SK-N-SH (cell line): ENCODE measurements at regions of chr14 and their contacts with region 1.

Region 1: DNA sequence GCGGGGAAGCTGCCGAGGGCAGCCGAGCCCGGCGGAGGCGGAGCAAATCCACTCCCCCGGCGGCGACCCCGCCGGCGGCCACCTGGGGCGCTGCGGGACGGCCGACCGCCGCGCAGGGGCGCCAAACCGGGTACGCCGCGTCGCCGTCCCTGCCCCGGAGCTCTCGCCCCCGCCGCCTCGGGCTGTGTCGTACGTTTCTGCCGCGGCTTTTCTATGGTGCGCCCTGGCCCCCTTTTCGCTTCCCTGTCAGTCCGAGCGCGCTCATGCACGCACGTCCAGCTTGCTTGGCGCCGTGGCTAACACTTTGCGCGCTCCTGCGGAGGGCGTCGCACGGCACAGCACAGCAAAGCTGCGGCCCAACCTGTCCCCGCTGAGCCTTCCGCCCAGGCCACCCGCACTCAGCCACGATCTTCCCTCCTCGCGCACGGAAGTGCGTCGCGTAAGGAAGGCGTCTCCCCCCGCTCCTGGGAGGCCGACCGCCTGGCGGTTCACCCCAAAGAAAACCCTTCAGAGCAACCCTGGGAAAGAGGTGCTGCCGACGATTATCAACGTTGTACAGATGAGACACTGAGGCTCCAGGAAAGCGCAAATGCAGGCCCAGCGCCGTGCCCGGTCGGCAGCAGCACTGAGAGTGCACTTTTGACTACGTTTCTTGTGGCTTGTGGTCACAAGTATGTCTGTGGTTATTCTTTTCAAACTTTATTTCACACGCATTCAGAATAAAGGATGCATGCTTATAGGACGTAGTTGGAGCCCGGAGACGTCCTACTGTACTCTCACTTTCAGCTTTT is at the start of gene HECTD1:
- DNase-seq: peak; percentile 97
- H3K4me3 ChIP-seq: peak within 1 kb of the TSS; percentile 77 to 87
- H3K27ac ChIP-seq: peak within 1 kb of the TSS; percentile 95 to 98
- H3K4me1 ChIP-seq: peaks cover 5 to 18% of the 10 kb centered on the region in 2 experiments
- H3K27me3 ChIP-seq: no peaks in the 10 kb centered on the region
- CTCF ChIP-seq: peak; percentile 67
- EP300 ChIP-seq: peak in 1 of 2 experiments; percentile 19; a peak in 2 of 4 replicates
- RAD21 ChIP-seq: peak; percentile 48
- polyA plus RNA-seq, gene HECTD1: 43.2 and 48.8 TPM in 2 replicates

Region 2: DNA sequence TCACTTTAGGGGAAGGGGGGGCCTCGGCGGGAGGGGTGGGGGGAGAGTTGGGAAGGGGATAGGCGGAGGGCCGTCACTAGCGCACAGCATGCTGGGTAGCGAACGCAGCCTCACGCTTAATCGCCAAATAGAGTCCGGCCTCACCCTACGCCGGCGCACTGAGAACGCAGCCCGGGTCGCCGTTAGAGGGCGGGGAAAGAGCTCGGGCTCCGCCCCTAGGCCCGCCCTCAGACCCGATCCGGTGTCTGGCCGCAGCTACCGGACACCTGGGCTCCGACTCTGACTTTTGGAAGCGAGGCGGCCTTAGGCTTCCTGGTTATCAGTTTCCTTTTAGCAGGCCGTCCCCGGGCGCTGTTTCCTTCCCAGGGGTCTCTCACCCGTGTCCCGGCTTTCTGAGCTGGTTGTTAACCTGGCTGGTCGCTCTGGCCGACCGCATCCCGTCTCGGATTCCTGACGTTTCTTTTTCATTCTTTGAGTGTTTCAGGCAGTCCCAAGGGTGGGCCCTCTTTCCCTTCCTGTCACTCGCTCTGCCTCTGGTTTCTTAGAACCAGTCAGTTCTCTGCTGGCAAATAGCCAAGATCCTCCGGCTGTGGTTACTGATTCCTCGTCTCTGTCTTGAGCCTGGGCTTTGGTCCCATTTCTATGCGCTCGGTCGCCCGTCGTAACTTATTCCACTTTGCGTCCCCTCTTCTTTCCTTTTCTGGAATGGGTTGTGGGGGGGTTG is 181.4 kb before region 1 on chr14:
- CTCF ChIA-PET with region 1: no interaction called
- POLR2A ChIA-PET with region 1: interaction called, 12 read pairs
- DNase-seq: peak; percentile 93
- H3K4me3 ChIP-seq: peak overlapping the region; percentile 73 to 96
- H3K27ac ChIP-seq: peak overlapping the region; percentile 94 to 98
- H3K4me1 ChIP-seq: peaks cover 9 to 13% of the 10 kb centered on the region in 2 experiments; a peak in 3 of 4 replicates
- H3K27me3 ChIP-seq: no peaks in the 10 kb centered on the region
- CTCF ChIP-seq: no peak
- EP300 ChIP-seq: no peak
- RAD21 ChIP-seq: no peak

Region 3: DNA sequence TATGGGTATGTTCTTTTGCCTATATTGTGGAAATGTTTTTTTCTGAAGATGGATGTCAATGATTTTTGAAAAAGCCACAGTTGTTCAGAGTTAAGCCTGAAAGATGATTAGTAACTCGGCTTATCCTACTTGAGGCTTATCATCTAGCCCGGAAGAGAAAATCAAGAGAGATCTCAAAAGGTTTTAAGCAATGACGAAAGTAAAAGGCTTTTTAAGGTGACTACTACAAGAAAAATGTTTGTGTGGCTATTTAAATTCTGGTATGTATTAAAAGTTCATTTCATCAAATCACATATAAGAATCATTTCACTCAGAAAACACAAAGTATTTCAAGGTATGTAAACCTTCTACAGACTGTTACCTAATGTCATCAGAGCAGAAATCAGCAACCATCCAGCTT is 172.2 kb after region 1 on chr14:
- CTCF ChIA-PET with region 1: no interaction called
- POLR2A ChIA-PET with region 1: no interaction called
- DNase-seq: no peak
- H3K4me3 ChIP-seq: no peak overlapping the region
- H3K27ac ChIP-seq: peak overlapping the region in 1 of 2 experiments; percentile 22; a peak in 1 of 4 replicates
- H3K4me1 ChIP-seq: no peaks in the 10 kb centered on the region
- H3K27me3 ChIP-seq: no peaks in the 10 kb centered on the region
- CTCF ChIP-seq: no peak
- EP300 ChIP-seq: no peak
- RAD21 ChIP-seq: no peak